Calu3 (cell line): ENCODE measurements at regions of chr7 and their contacts with region 1.

Region 1: GRCh38 chr7:38932509-38933168 is 23.6 kb upstream of the VPS41 start:
- DNase-seq: peak; percentile 91
- H3K4me3 Mint-ChIP-seq: peak overlapping the region; percentile 9
- H3K27ac Mint-ChIP-seq: peak overlapping the region; percentile 41
- H3K4me1 Mint-ChIP-seq: peaks cover 75% of the 10 kb centered on the region
- H3K27me3 Mint-ChIP-seq: no peaks in the 10 kb centered on the region
- CTCF ChIP-seq: peak; percentile 97

Region 2: GRCh38 chr7:38796626-38797501 is 135.8 kb before region 1 on chr7:
- CTCF ChIA-PET with region 1: interaction called, 3 read pairs
- intact Hi-C with region 1: loop called (anchors 1 kb)
- DNase-seq: peak; percentile 79
- H3K4me3 Mint-ChIP-seq: no peak overlapping the region
- H3K27ac Mint-ChIP-seq: peak overlapping the region; percentile 25
- H3K4me1 Mint-ChIP-seq: peaks cover 30% of the 10 kb centered on the region
- H3K27me3 Mint-ChIP-seq: no peaks in the 10 kb centered on the region
- CTCF ChIP-seq: peak; percentile 83

Region 3: DNA sequence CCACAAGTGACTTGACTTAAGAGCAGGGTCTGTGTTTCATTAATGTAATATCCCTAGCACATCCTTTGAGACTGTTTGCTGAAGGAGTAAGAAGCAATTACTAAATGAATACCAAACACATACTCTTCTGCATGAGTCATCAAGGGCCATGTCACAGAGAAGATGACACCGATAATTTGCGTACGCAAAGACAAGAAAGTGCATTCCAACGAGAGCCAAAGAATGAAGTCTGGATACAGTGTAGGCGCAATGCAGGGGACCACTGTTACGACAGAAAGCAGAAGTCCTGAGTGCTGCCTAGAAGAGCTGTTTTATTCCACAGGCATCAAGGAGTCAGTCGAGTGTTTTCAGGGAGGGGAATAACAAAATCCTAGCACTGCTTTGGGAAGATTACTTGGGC is 86.4 kb before region 1 on chr7:
- CTCF ChIA-PET with region 1: no interaction called
- intact Hi-C with region 1: no loop called
- DNase-seq: no peak
- H3K4me3 Mint-ChIP-seq: no peak overlapping the region
- H3K27ac Mint-ChIP-seq: peak overlapping the region; percentile 11
- H3K4me1 Mint-ChIP-seq: peaks cover 41% of the 10 kb centered on the region
- H3K27me3 Mint-ChIP-seq: no peaks in the 10 kb centered on the region
- CTCF ChIP-seq: no peak

Region 4: DNA sequence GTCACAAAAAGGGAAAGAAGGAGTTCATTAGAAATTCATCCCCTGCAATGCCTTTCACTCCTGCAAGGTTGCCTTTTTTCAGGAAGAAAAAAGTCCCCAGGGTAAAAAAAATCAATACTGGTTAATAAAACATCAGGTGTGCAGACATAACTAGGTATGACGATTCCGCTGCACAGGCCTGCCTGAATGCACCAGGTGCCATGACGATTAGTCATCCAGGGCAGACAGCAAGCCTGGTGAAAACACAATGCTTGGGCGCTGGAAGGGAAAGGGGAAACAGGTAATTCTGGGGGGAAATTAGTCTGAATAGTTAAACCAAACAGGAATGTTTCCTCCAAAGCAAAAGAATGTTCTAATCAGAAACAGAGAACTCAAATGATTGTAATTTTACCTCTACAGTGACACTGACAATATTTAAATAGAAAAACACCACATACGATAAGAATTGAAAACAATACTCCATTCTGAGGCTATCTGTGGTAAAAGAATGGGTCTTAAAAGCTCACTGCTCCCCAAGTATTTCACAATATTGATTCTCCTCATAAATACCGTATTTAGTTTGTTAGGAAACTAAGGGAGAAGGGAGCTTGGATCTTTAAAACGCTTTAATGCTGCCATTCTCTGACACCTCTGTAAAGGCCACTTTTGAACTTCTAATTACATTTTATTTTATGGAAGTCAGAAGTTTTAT is 68.9 kb before region 1 on chr7:
- CTCF ChIA-PET with region 1: interaction called, 4 read pairs
- intact Hi-C with region 1: loop called (anchors 1 kb)
- DNase-seq: peak; percentile 96
- H3K4me3 Mint-ChIP-seq: peak overlapping the region; percentile 52
- H3K27ac Mint-ChIP-seq: peak overlapping the region; percentile 77
- H3K4me1 Mint-ChIP-seq: peaks cover 33% of the 10 kb centered on the region
- H3K27me3 Mint-ChIP-seq: no peaks in the 10 kb centered on the region
- CTCF ChIP-seq: no peak

Region 5: GRCh38 chr7:39130857-39131526 is 198.4 kb after region 1 on chr7:
- CTCF ChIA-PET with region 1: no interaction called
- intact Hi-C with region 1: loop called (anchors 2 kb)
- DNase-seq: peak; percentile 42
- H3K4me3 Mint-ChIP-seq: peak overlapping the region; percentile 85
- H3K27ac Mint-ChIP-seq: peak overlapping the region; percentile 88
- H3K4me1 Mint-ChIP-seq: peaks cover 10% of the 10 kb centered on the region
- H3K27me3 Mint-ChIP-seq: no peaks in the 10 kb centered on the region
- CTCF ChIP-seq: no peak

Region 6: GRCh38 chr7:39465055-39465929 is 532.7 kb after region 1 on chr7:
- CTCF ChIA-PET with region 1: no interaction called
- intact Hi-C with region 1: loop called (anchors 1 kb)
- DNase-seq: peak; percentile 75
- H3K4me3 Mint-ChIP-seq: peak overlapping the region; percentile 36
- H3K27ac Mint-ChIP-seq: no peak overlapping the region
- H3K4me1 Mint-ChIP-seq: peaks cover 15% of the 10 kb centered on the region
- H3K27me3 Mint-ChIP-seq: no peaks in the 10 kb centered on the region
- CTCF ChIP-seq: peak; percentile 79